ENCODE measurements at regions of chr15 and their contacts with region 1.

Region 1: DNA sequence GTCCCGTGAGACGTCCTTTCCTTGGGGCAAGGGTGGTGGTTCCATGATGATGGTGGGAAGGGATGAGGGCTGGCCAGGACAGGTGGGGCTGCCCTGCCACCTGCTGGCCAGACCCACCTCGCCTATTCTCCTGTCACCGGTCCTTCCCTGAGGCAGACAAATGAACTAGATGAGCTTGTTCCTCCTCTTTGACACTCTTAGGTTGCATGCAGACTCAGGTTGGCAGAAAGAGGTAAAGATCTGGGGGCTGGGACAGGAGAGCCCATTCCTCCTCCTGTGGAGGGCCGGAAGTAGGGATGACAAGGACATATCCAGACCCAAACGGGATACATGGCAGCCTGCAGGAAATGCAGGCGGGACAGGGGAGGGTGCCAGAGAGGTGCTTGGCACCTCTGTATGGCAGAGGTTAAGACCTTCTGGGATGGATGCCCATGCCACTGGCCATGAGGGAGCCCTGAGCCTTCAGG is 38.6 kb downstream of the ACSBG1 start:
- DNase-seq: no peak
- H3K4me3 ChIP-seq: no peak overlapping the region
- H3K27ac ChIP-seq: no peak overlapping the region
- H3K4me1 ChIP-seq: no peaks in the 10 kb centered on the region
- H3K27me3 ChIP-seq: no peaks in the 10 kb centered on the region
- CTCF ChIP-seq: peak; percentile 62 to 87 (median 76)
- POLR2A ChIP-seq: no peak

Region 2: GRCh38 chr15:77966540-77967290 is 229.1 kb before region 1 on chr15:
- intact Hi-C with region 1: no loop called
- DNase-seq: no peak
- H3K4me3 ChIP-seq: no peak overlapping the region
- H3K27ac ChIP-seq: no peak overlapping the region
- H3K4me1 ChIP-seq: peaks cover 0 to 4% (median under 1%) of the 10 kb centered on the region in 3 donors
- H3K27me3 ChIP-seq: no peaks in the 10 kb centered on the region
- CTCF ChIP-seq: peak; percentile 72 to 87 (median 81)
- POLR2A ChIP-seq: no peak

Region 3: GRCh38 chr15:78131295-78132061 is 64.3 kb before region 1 on chr15 and contains the start of gene CIB2:
- intact Hi-C with region 1: loop called (anchors 5 kb)
- DNase-seq: no peak
- H3K4me3 ChIP-seq: peak within 1 kb of the TSS; percentile 33 to 83 (median 73)
- H3K27ac ChIP-seq: peak within 1 kb of the TSS; percentile 65 to 87 (median 86)
- H3K4me1 ChIP-seq: peaks cover 18 to 36% (median 23%) of the 10 kb centered on the region in 3 donors
- H3K27me3 ChIP-seq: no peaks in the 10 kb centered on the region
- CTCF ChIP-seq: peak; percentile 57 to 94 (median 87)
- POLR2A ChIP-seq: no peak
- total RNA-seq, gene CIB2: 1.1 to 11.8 (median 1.5) TPM